Adrenal gland (tissue), 19 donors: ENCODE measurements at regions of chr16 and their contacts with region 1.

Region 1: GRCh38 chr16:57994778-57995177 is 5.7 kb downstream of the ZNF319 start:
- DNase-seq: peak in 6 of 7 donors; percentile 70 to 85 (median 76)
- H3K4me3 ChIP-seq: no peak overlapping the region
- H3K27ac ChIP-seq: no peak overlapping the region
- H3K4me1 ChIP-seq: peaks cover 10 to 12% of the 10 kb centered on the region in 2 donors
- H3K27me3 ChIP-seq: no peaks in the 10 kb centered on the region
- CTCF ChIP-seq: peak in 5 of 6 experiments; percentile 16 to 53 (median 46)
- POLR2A ChIP-seq: no peak

Region 2: GRCh38 chr16:57589374-57589773 is 405.4 kb before region 1 on chr16:
- intact Hi-C with region 1: loop called in 1 of 2 experiments (anchors 10 kb)
- DNase-seq: peak in 1 of 7 donors; percentile 37
- H3K4me3 ChIP-seq: no peak overlapping the region
- H3K27ac ChIP-seq: no peak overlapping the region
- H3K4me1 ChIP-seq: peaks cover 0 to 11% of the 10 kb centered on the region in 2 donors
- H3K27me3 ChIP-seq: no peaks in the 10 kb centered on the region
- CTCF ChIP-seq: no peak
- POLR2A ChIP-seq: no peak

Region 3: GRCh38 chr16:57741660-57742191 is 253.1 kb before region 1 on chr16:
- intact Hi-C with region 1: loop called in 1 of 2 experiments (anchors 5 kb)
- DNase-seq: no peak
- H3K4me3 ChIP-seq: no peak overlapping the region
- H3K27ac ChIP-seq: no peak overlapping the region
- H3K4me1 ChIP-seq: peaks cover 3 to 4% of the 10 kb centered on the region in 2 donors
- H3K27me3 ChIP-seq: no peaks in the 10 kb centered on the region
- CTCF ChIP-seq: no peak
- POLR2A ChIP-seq: no peak

Region 4: DNA sequence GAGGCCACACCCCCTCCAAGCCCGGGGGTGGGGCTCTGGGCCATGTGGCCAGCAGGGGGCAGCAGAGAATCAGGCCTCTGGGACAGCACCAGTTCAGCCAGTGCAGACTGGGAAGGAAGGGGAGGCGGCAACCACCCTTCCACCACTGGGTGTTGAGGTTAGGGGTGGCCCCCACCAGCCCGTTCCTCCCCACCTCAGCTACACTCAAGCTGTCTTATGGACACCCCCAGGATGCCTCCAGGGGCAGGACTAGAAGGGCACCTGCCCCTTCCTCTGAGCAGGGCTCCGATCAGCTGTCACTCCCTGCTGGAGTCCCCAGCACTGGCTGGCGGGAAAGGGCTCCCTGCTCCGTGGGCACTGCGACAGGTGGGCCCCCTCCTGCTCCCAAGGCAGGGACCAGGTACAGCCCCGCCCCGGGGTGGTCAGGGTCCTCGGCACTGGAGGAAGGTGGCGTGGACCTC is 237.4 kb before region 1 on chr16:
- intact Hi-C with region 1: loop called in 1 of 2 experiments (anchors 5 kb)
- DNase-seq: peak; percentile 81 to 94 (median 90)
- H3K4me3 ChIP-seq: no peak overlapping the region
- H3K27ac ChIP-seq: peak overlapping the region in 1 of 5 donors; percentile 45
- H3K4me1 ChIP-seq: peaks cover 0 to 3% of the 10 kb centered on the region in 2 donors
- H3K27me3 ChIP-seq: no peaks in the 10 kb centered on the region
- CTCF ChIP-seq: peak; percentile 90 to 98 (median 96)
- POLR2A ChIP-seq: no peak

Region 5: GRCh38 chr16:57899771-57900661 is 94.8 kb before region 1 on chr16:
- intact Hi-C with region 1: loop called in 1 of 2 experiments (anchors 5 kb)
- DNase-seq: peak; percentile 58 to 90 (median 80)
- H3K4me3 ChIP-seq: no peak overlapping the region
- H3K27ac ChIP-seq: no peak overlapping the region
- H3K4me1 ChIP-seq: no peaks in the 10 kb centered on the region
- H3K27me3 ChIP-seq: no peaks in the 10 kb centered on the region
- CTCF ChIP-seq: peak; percentile 80 to 89 (median 86)
- POLR2A ChIP-seq: no peak

Region 6: GRCh38 chr16:57941016-57941656 is 53.6 kb before region 1 on chr16:
- intact Hi-C with region 1: loop called in 1 of 2 experiments (anchors 5 kb)
- DNase-seq: peak; percentile 85 to 95 (median 91)
- H3K4me3 ChIP-seq: no peak overlapping the region
- H3K27ac ChIP-seq: peak overlapping the region in 2 of 5 donors; percentile 5 to 30
- H3K4me1 ChIP-seq: peaks cover 3 to 10% of the 10 kb centered on the region in 2 donors
- H3K27me3 ChIP-seq: no peaks in the 10 kb centered on the region
- CTCF ChIP-seq: peak in 1 of 6 experiments; percentile 4
- POLR2A ChIP-seq: no peak

Region 7: GRCh38 chr16:58152246-58152868 is 157.6 kb after region 1 on chr16:
- intact Hi-C with region 1: no loop called
- DNase-seq: no peak
- H3K4me3 ChIP-seq: no peak overlapping the region
- H3K27ac ChIP-seq: no peak overlapping the region
- H3K4me1 ChIP-seq: no peaks in the 10 kb centered on the region
- H3K27me3 ChIP-seq: no peaks in the 10 kb centered on the region
- CTCF ChIP-seq: no peak
- POLR2A ChIP-seq: no peak